ENCODE measurements at regions of chr6 and their contacts with region 1.

Region 1: GRCh38 chr6:25452031-25452430 is 172.9 kb downstream of the CARMIL1 start:
- DNase-seq: no peak
- H3K4me3 ChIP-seq: no peak overlapping the region
- H3K27ac ChIP-seq: no peak overlapping the region
- H3K4me1 ChIP-seq: peaks cover 28% of the 10 kb centered on the region
- CTCF ChIP-seq: no peak

Region 2: GRCh38 chr6:25441663-25442270 is 10.3 kb before region 1 on chr6:
- CTCF ChIA-PET with region 1: no interaction called
- POLR2A ChIA-PET with region 1: interaction called, 10 read pairs
- intact Hi-C with region 1: no loop called
- DNase-seq: no peak
- H3K4me3 ChIP-seq: no peak overlapping the region
- H3K27ac ChIP-seq: no peak overlapping the region
- H3K4me1 ChIP-seq: peaks cover 5% of the 10 kb centered on the region
- CTCF ChIP-seq: no peak

Region 3: DNA sequence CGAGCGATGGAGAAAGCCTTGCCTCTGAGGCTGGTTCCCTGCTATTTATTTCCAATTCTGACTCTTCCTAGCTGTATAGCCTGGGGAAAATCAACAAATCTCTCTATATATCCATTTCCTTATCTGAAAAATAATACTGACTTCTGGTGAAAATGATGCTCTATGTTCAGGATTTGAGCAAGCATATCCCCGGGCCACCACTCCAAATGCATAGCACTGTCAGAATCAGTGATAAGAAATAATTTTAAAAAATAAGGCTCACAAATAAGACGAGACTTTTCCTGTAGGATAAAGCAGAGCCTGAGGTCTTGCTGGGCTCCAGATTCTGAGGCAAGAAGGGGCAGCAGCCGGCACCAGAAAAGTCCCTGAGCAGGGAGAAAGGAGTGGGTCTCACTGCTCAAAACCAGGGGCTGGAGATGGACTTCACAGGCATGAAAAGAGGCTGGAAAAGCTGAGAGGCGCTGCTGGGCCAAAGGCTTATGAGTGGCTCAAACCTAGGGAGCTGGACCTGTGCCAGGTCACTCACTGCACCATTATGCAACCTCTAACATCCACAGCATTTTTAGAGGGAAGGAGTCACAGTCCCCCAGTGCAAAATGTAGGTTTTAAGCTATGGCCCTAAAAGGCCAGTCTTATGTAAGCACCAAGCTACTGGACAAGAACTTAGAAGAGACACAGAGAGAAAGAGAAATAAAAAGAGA is 254.4 kb after region 1 on chr6:
- CTCF ChIA-PET with region 1: no interaction called
- POLR2A ChIA-PET with region 1: no interaction called
- intact Hi-C with region 1: no loop called
- DNase-seq: no peak
- H3K4me3 ChIP-seq: no peak overlapping the region
- H3K27ac ChIP-seq: no peak overlapping the region
- H3K4me1 ChIP-seq: no peaks in the 10 kb centered on the region
- CTCF ChIP-seq: no peak

Measured in OCI-LY7 (cell line).